Spleen (tissue), 13 donors: ENCODE measurements at regions of chr12 and their contacts with region 1.

Region 1: GRCh38 chr12:50839042-50839441 is 3.7 kb upstream of the TMPRSS12 start:
- DNase-seq: no peak
- H3K4me3 ChIP-seq: no peak overlapping the region
- H3K27ac ChIP-seq: no peak overlapping the region
- H3K4me1 ChIP-seq: no peaks in the 10 kb centered on the region
- H3K27me3 ChIP-seq: peaks cover 0 to 5% (median 0%) of the 10 kb centered on the region in 7 donors
- CTCF ChIP-seq: no peak
- POLR2A ChIP-seq: no peak

Region 2: GRCh38 chr12:50934981-50935807 is 96.2 kb after region 1 on chr12:
- intact Hi-C with region 1: loop called (anchors 10 kb)
- DNase-seq: no peak
- H3K4me3 ChIP-seq: no peak overlapping the region
- H3K27ac ChIP-seq: peak overlapping the region in 7 of 8 donors; percentile 45 to 73 (median 57)
- H3K4me1 ChIP-seq: peaks cover 6 to 61% (median 32%) of the 10 kb centered on the region in 6 donors
- H3K27me3 ChIP-seq: no peaks in the 10 kb centered on the region
- CTCF ChIP-seq: no peak
- POLR2A ChIP-seq: no peak